ENCODE measurements at regions of chr11 and their contacts with region 1.

Region 1: GRCh38 chr11:1564535-1565172 is 7.4 kb downstream of the DUSP8 start:
- DNase-seq: no peak
- ATAC-seq: no peak
- H3K4me3 ChIP-seq: no peak overlapping the region
- H3K27ac ChIP-seq: peak overlapping the region in 3 of 4 donors; percentile 42 to 72 (median 51)
- H3K4me1 ChIP-seq: peaks cover 8 to 75% of the 10 kb centered on the region in 2 donors
- H3K27me3 ChIP-seq: no peaks in the 10 kb centered on the region
- CTCF ChIP-seq: no peak
- POLR2A ChIP-seq: no peak

Region 2: GRCh38 chr11:809287-810039 is 755.2 kb before region 1 on chr11 and contains the start of gene RPLP2:
- in situ Hi-C with region 1: no loop called
- intact Hi-C with region 1: no loop called
- DNase-seq: peak; percentile 97 to 98
- ATAC-seq: peak; percentile 83 to 85
- H3K4me3 ChIP-seq: peak within 1 kb of the TSS; percentile 66 to 97 (median 78)
- H3K27ac ChIP-seq: peak within 1 kb of the TSS; percentile 97 to 100 (median 100)
- H3K4me1 ChIP-seq: peaks cover 38 to 41% of the 10 kb centered on the region in 2 donors
- H3K27me3 ChIP-seq: no peaks in the 10 kb centered on the region
- CTCF ChIP-seq: peak in 1 of 5 experiments; percentile 10
- POLR2A ChIP-seq: peak; percentile 90 to 95
- total RNA-seq, gene RPLP2: 314 to 600 (median 440) TPM

Region 3: DNA sequence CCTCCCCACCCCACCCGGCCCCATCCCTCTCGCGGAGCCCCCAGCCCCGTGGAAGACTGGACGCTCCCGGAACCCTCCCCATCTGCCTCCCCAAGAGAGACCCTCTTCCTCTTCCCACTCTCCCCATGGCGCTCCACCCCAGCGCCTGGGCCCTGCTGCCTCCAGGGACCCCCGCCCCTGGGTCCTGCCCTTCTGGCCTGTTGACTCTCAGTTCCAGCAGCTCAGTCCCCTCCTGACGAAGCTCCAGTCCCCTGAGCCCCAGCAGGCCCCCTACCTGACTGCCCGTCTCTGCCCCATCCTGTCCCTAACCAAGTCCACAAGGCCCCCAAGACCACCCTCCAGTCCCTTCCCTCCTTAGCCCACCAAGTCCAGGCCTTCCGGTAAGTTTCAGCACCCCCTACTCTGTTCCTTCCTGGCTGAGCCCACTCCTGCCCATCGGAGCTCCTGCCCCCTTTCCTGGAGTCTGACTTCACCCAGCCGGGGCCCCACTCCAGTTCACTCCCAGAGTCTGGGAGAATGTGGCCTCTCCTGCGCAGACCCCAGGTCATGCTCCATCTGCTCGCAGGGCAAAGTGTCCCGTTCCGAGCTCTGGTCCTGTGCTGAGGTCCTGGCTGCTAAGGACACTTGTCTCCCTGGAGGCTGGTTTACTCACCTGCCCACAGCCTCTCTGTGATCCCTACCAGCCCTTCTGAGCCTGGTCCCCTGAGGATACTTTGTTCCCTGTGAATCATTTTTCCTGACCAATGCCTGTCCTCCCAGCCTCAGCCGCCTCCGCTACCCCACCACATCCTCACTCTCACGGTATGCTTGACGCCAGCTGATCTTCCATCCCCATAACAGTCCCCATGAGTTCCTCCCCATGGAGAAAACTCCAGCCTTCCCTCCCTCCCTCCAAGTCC is 185.0 kb after region 1 on chr11:
- in situ Hi-C with region 1: no loop called
- intact Hi-C with region 1: loop called (anchors 5 kb)
- DNase-seq: peak in 1 of 2 donors; percentile 50
- ATAC-seq: peak; percentile 6 to 12
- H3K4me3 ChIP-seq: peak overlapping the region in 2 of 4 donors; percentile 44 to 62
- H3K27ac ChIP-seq: peak overlapping the region; percentile 83 to 90 (median 88)
- H3K4me1 ChIP-seq: peaks cover 71 to 80% of the 10 kb centered on the region in 2 donors
- H3K27me3 ChIP-seq: no peaks in the 10 kb centered on the region
- CTCF ChIP-seq: no peak
- POLR2A ChIP-seq: no peak

Measured in gastrocnemius medialis (tissue), 4 donors.